Caco-2 (cell line): ENCODE measurements at regions of chr11 and their contacts with region 1.

Region 1: DNA sequence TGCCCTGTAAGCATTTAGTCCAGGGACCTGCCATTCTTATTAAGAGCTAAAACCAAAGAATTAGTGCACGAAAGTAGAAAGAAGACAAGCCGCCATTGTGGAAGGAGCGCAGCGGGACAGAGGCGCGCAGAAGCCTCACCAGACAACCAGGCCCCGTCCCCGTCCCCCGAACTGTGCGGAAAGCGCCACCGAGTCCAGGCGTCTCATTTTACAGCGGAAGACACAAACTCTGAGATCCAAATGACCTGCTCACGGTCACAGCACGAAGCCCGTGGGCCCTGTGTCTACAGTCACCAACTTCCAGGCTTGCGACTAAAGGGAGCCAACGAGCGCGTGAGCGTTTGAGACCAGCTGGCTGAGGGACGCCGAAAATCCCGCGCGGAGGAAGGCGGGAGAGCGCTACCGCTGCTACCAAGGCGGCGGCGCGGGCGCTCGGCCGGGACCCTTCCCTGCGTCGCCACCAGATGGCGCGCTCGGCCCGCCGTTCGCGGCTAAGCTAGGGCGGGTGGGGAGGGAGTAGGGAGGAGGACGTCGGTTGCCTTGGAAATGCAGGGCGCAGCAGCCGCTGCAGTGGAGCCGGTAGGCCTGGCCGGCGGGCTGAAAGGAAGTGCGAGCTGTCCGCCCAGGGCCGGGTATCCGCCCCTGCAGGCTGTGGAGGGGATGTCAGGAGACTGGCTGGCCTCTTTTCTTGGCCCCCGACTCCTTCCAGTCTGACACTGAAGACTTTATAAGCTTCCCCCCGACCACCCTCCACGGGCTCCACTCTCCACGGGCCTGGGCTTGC is 434 bp upstream of the CCDC83 start:
- DNase-seq: peak; percentile 97 to 99
- H3K4me3 ChIP-seq: peak overlapping the region; percentile 75
- H3K4me3 Mint-ChIP-seq: peak overlapping the region; percentile 83
- H3K27ac Mint-ChIP-seq: peak overlapping the region; percentile 87
- H3K4me1 ChIP-seq: peaks cover 5% of the 10 kb centered on the region
- H3K4me1 Mint-ChIP-seq: peaks cover 16% of the 10 kb centered on the region
- H3K27me3 ChIP-seq: no peaks in the 10 kb centered on the region
- H3K27me3 Mint-ChIP-seq: no peaks in the 10 kb centered on the region
- CTCF ChIP-seq: peak; percentile 95 to 98

Region 2: GRCh38 chr11:85595285-85595884 is 259.4 kb before region 1 on chr11:
- CTCF ChIA-PET with region 1: no interaction called
- POLR2A ChIA-PET with region 1: no interaction called
- intact Hi-C with region 1: loop called (anchors 1 kb)
- DNase-seq: peak in 1 of 2 experiments; percentile 62
- H3K4me3 ChIP-seq: no peak overlapping the region
- H3K4me3 Mint-ChIP-seq: no peak overlapping the region
- H3K27ac Mint-ChIP-seq: no peak overlapping the region
- H3K4me1 ChIP-seq: no peaks in the 10 kb centered on the region
- H3K4me1 Mint-ChIP-seq: peaks cover 6% of the 10 kb centered on the region
- H3K27me3 ChIP-seq: peaks cover 2% of the 10 kb centered on the region; the same call in 1 of the 2 replicates
- H3K27me3 Mint-ChIP-seq: peaks cover 4% of the 10 kb centered on the region
- CTCF ChIP-seq: peak; percentile 69 to 83

Region 3: GRCh38 chr11:85810871-85811611 is 43.7 kb before region 1 on chr11 and contains the start of gene SYTL2:
- CTCF ChIA-PET with region 1: interaction called, 11 read pairs
- POLR2A ChIA-PET with region 1: no interaction called
- intact Hi-C with region 1: loop called (anchors 2 kb)
- DNase-seq: peak; percentile 84 to 93
- H3K4me3 ChIP-seq: peak within 1 kb of the TSS; percentile 91
- H3K4me3 Mint-ChIP-seq: peak within 1 kb of the TSS; percentile 80
- H3K27ac Mint-ChIP-seq: peak within 1 kb of the TSS; percentile 44
- H3K4me1 ChIP-seq: peaks cover 29% of the 10 kb centered on the region
- H3K4me1 Mint-ChIP-seq: peaks cover 51% of the 10 kb centered on the region
- H3K27me3 ChIP-seq: no peaks in the 10 kb centered on the region
- H3K27me3 Mint-ChIP-seq: no peaks in the 10 kb centered on the region
- CTCF ChIP-seq: peak in 1 of 2 experiments; percentile 33
- total RNA-seq, gene SYTL2: 110 and 156 TPM in 2 replicates

Region 4: GRCh38 chr11:85941380-85941973 is 86.7 kb after region 1 on chr11:
- CTCF ChIA-PET with region 1: interaction called, 4 read pairs
- POLR2A ChIA-PET with region 1: interaction called, 6 read pairs
- intact Hi-C with region 1: loop called (anchors 1 kb)
- DNase-seq: peak; percentile 75 to 78
- H3K4me3 ChIP-seq: no peak overlapping the region
- H3K4me3 Mint-ChIP-seq: no peak overlapping the region
- H3K27ac Mint-ChIP-seq: no peak overlapping the region
- H3K4me1 ChIP-seq: no peaks in the 10 kb centered on the region
- H3K4me1 Mint-ChIP-seq: peaks cover 6% of the 10 kb centered on the region
- H3K27me3 ChIP-seq: no peaks in the 10 kb centered on the region
- H3K27me3 Mint-ChIP-seq: no peaks in the 10 kb centered on the region
- CTCF ChIP-seq: peak; percentile 80 to 81

Region 5: GRCh38 chr11:86068951-86069407 is 214.2 kb after region 1 on chr11 and contains the start of gene PICALM:
- CTCF ChIA-PET with region 1: interaction called, 11 read pairs
- POLR2A ChIA-PET with region 1: no interaction called
- intact Hi-C with region 1: no loop called
- DNase-seq: peak; percentile 100
- H3K4me3 ChIP-seq: peak within 1 kb of the TSS; percentile 91
- H3K4me3 Mint-ChIP-seq: peak within 1 kb of the TSS; percentile 95
- H3K27ac Mint-ChIP-seq: peak within 1 kb of the TSS; percentile 85
- H3K4me1 ChIP-seq: peaks cover 24% of the 10 kb centered on the region
- H3K4me1 Mint-ChIP-seq: peaks cover 24% of the 10 kb centered on the region
- H3K27me3 ChIP-seq: no peaks in the 10 kb centered on the region
- H3K27me3 Mint-ChIP-seq: no peaks in the 10 kb centered on the region
- CTCF ChIP-seq: no peak
- total RNA-seq, gene PICALM: 321 and 331 TPM in 2 replicates

Region 6: GRCh38 chr11:86218125-86219084 is 363.7 kb after region 1 on chr11:
- CTCF ChIA-PET with region 1: interaction called, 9 read pairs
- POLR2A ChIA-PET with region 1: no interaction called
- intact Hi-C with region 1: loop called (anchors 1 kb)
- DNase-seq: peak; percentile 74 to 88
- H3K4me3 ChIP-seq: no peak overlapping the region
- H3K4me3 Mint-ChIP-seq: peak overlapping the region; percentile 15
- H3K27ac Mint-ChIP-seq: peak overlapping the region; percentile 25
- H3K4me1 ChIP-seq: peaks cover 12% of the 10 kb centered on the region
- H3K4me1 Mint-ChIP-seq: peaks cover 22% of the 10 kb centered on the region
- H3K27me3 ChIP-seq: no peaks in the 10 kb centered on the region
- H3K27me3 Mint-ChIP-seq: no peaks in the 10 kb centered on the region
- CTCF ChIP-seq: peak; percentile 98

Region 7: GRCh38 chr11:86291466-86292262 is 436.9 kb after region 1 on chr11:
- CTCF ChIA-PET with region 1: interaction called, 3 read pairs
- POLR2A ChIA-PET with region 1: interaction called, 3 read pairs
- intact Hi-C with region 1: loop called (anchors 1 kb)
- DNase-seq: peak; percentile 63 to 82
- H3K4me3 ChIP-seq: no peak overlapping the region
- H3K4me3 Mint-ChIP-seq: no peak overlapping the region
- H3K27ac Mint-ChIP-seq: no peak overlapping the region
- H3K4me1 ChIP-seq: 0 out of 2 replicates have a peak, but pooled peaks cover 4% of the 10 kb centered on the region
- H3K4me1 Mint-ChIP-seq: no peaks in the 10 kb centered on the region
- H3K27me3 ChIP-seq: no peaks in the 10 kb centered on the region
- H3K27me3 Mint-ChIP-seq: no peaks in the 10 kb centered on the region
- CTCF ChIP-seq: peak; percentile 92 to 98